ENCODE measurements at regions of chr2 and their contacts with region 1.

Region 1: GRCh38 chr2:102235491-102235890 is 48.7 kb downstream of the IL1RL2 start:
- DNase-seq: no peak
- ATAC-seq: no peak
- H3K4me3 ChIP-seq: no peak overlapping the region
- H3K27ac ChIP-seq: no peak overlapping the region
- H3K4me1 ChIP-seq: peaks cover 11% of the 10 kb centered on the region
- H3K27me3 ChIP-seq: no peaks in the 10 kb centered on the region
- CTCF ChIP-seq: peak in 1 of 7 experiments; percentile 17
- POLR2A ChIP-seq: no peak

Region 2: DNA sequence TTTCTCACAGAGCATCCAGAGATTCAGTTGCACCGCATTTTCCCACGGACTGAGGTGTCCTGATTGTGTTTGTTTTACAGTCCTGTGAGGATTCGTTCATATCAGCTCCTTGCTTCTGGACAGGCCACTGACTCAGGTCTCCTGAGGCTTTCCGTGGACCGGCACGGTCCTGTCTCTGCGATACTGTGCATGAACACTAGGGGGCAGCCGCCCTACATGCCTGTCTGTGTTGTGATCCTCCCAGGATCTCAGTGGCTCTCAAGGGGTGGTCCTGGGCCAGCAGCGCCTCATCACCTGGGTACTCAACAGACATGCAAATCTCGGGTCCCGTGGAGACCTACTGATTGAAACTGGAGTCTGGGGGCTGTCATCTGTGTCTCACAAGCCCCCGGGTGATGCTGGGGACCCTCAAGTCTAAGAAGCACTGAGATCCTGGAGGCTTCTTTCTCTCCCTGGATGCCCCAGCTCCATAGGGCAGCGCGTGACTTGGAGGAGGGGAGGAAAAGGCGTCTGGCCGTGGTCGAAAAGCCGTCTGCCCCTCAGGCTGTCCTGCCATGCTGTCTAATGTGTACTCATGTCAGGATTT is 214.8 kb before region 1 on chr2:
- intact Hi-C with region 1: loop called (anchors 5 kb)
- DNase-seq: peak; percentile 87 to 90 (median 90)
- ATAC-seq: peak; percentile 90
- H3K4me3 ChIP-seq: no peak overlapping the region
- H3K27ac ChIP-seq: no peak overlapping the region
- H3K4me1 ChIP-seq: peaks cover 10% of the 10 kb centered on the region
- H3K27me3 ChIP-seq: no peaks in the 10 kb centered on the region
- CTCF ChIP-seq: peak; percentile 95 to 98 (median 97)
- POLR2A ChIP-seq: no peak

Measured in body of pancreas (tissue), 4 donors.